PC-9 (cell line): ENCODE measurements at regions of chr1 and their contacts with region 1.

Region 1: GRCh38 chr1:52168373-52169080 is 26.6 kb downstream of the ZFYVE9 start:
- DNase-seq: no peak
- H3K4me3 ChIP-seq: no peak overlapping the region
- H3K27ac ChIP-seq: no peak overlapping the region
- H3K4me1 ChIP-seq: no peaks in the 10 kb centered on the region
- H3K27me3 ChIP-seq: no peaks in the 10 kb centered on the region
- CTCF ChIP-seq: no peak

Region 2: GRCh38 chr1:52281518-52281917 is 113.0 kb after region 1 on chr1:
- CTCF ChIA-PET with region 1: no interaction called
- POLR2A ChIA-PET with region 1: interaction called, 19 read pairs
- intact Hi-C with region 1: no loop called
- DNase-seq: peak in 1 of 2 experiments; percentile 64
- H3K4me3 ChIP-seq: no peak overlapping the region
- H3K27ac ChIP-seq: no peak overlapping the region
- H3K4me1 ChIP-seq: no peaks in the 10 kb centered on the region; the same call in 1 of the 2 replicates
- H3K27me3 ChIP-seq: no peaks in the 10 kb centered on the region
- CTCF ChIP-seq: no peak